ENCODE measurements at regions of chr11 and their contacts with region 1.

Region 1: DNA sequence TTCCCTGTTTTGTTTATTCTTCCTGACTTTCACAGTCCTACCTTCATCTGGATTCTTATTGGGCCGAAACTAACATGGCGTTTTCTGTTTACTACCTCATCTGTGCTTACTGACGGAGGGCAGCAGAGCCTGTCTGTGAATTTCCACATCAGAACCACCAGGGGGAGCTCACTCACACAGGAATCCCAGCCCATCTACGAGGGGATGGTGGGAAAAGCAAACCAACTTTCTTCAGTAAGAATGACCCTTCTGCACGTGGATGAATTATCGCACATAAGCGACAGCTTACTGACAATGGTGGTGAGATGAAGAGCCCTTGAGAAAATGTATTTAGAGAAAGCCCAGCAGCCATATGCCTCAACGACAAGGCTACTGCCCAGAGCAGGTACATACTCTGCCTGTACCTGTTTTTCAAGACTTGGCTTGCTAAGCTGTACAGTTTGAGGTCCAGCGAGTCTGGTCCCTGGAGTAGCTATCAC is 42.5 kb downstream of the LARGE2 start:
- DNase-seq: peak; percentile 38
- H3K4me3 Mint-ChIP-seq: no peak overlapping the region
- H3K27ac Mint-ChIP-seq: no peak overlapping the region
- H3K4me1 Mint-ChIP-seq: no peaks in the 10 kb centered on the region
- H3K27me3 Mint-ChIP-seq: no peaks in the 10 kb centered on the region

Region 2: DNA sequence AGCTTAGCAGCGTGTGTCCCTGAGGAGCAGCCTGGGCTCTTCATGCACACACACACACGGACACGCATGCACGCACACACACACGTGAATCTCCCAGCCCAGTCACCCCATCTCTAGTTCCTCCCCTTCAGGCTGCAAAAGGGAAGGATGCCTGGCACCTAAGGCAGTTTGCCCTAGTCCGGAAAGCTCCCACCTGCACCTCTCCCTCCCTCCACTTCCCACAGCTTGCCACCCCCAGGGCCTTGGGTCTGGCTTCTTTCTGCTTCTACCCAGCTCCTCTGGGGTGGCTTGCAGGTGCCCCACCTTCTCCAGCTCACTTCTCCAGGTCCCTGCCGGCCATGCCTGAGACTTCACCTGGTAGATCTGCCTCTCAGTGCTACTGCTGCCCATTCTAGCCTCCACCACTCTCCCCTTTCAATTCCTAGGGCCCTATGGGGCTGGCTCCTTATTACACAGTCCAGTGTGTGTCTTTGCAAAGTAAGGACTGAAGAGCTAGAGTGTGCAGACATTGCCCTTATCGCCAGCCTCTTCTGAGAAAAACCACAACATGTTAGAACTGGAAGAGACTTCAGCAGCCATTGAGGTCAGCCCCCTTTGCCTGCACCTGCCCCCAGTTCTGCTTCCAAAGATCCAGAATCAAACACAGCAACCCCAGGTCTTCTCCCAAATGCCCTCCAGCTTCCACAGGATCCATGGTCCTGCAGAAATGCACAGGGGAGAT is 266.0 kb before region 1 on chr11:
- intact Hi-C with region 1: no loop called
- DNase-seq: no peak
- H3K4me3 Mint-ChIP-seq: no peak overlapping the region
- H3K27ac Mint-ChIP-seq: no peak overlapping the region
- H3K4me1 Mint-ChIP-seq: no peaks in the 10 kb centered on the region
- H3K27me3 Mint-ChIP-seq: peaks cover 13% of the 10 kb centered on the region

Region 3: GRCh38 chr11:45879803-45880686 is 84.9 kb before region 1 on chr11:
- intact Hi-C with region 1: no loop called
- DNase-seq: no peak
- H3K4me3 Mint-ChIP-seq: no peak overlapping the region
- H3K27ac Mint-ChIP-seq: no peak overlapping the region
- H3K4me1 Mint-ChIP-seq: peaks cover 2% of the 10 kb centered on the region
- H3K27me3 Mint-ChIP-seq: no peaks in the 10 kb centered on the region

Region 4: DNA sequence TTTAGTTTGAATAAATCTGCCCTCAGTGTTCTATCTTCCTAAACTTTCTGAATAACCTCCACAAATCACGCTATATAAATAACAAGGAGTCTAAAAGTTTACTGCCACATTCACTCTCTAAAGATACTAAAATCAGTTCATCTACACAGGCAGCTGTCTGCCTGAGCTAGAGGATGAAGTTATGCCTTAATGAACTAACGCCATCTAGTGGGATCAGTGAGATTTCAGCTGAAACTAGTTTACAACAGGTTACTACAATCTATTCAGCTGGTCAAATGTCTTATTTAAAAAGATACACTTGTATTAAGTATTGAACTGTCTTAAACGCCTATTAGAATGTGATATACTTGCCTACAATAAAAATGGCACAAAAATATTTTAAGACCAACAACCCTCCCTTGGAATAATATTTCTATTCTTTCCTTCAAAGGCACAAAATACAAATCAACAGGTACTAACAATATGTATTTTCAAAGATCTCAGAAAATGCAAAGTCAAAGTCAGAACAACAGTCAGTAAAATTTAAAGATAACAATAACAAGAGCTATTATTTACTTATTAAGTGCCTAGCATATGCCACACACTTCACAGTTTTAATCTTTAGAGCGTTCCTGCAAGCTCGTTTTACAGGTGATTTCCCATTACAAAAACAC is 41.6 kb after region 1 on chr11:
- intact Hi-C with region 1: loop called (anchors 1 kb)
- DNase-seq: no peak
- H3K4me3 Mint-ChIP-seq: no peak overlapping the region
- H3K27ac Mint-ChIP-seq: no peak overlapping the region
- H3K4me1 Mint-ChIP-seq: no peaks in the 10 kb centered on the region
- H3K27me3 Mint-ChIP-seq: no peaks in the 10 kb centered on the region

Region 5: GRCh38 chr11:46176402-46176801 is 211.5 kb after region 1 on chr11:
- intact Hi-C with region 1: no loop called
- DNase-seq: no peak
- H3K4me3 Mint-ChIP-seq: no peak overlapping the region
- H3K27ac Mint-ChIP-seq: no peak overlapping the region
- H3K4me1 Mint-ChIP-seq: no peaks in the 10 kb centered on the region
- H3K27me3 Mint-ChIP-seq: peaks cover 17% of the 10 kb centered on the region

Region 6: GRCh38 chr11:46315033-46315738 is 350.2 kb after region 1 on chr11:
- intact Hi-C with region 1: loop called (anchors 2 kb)
- DNase-seq: peak; percentile 54
- H3K4me3 Mint-ChIP-seq: no peak overlapping the region
- H3K27ac Mint-ChIP-seq: no peak overlapping the region
- H3K4me1 Mint-ChIP-seq: peaks cover 26% of the 10 kb centered on the region
- H3K27me3 Mint-ChIP-seq: no peaks in the 10 kb centered on the region

Measured in activated T-helper 1 cell treated with anti-CD3 and anti-CD28 coated beads, Interleukin-12 subunit alpha, Interleukin-12 subunit beta, Interleukin-2, Interleukin-4 antibody, amounts not matched to agents 30 ng/mL and 10 ng/mL and 1 ng/mL, durations not matched to agents 14 hours and 24 hours and 36 hours (primary cell).